ENCODE measurements at regions of chr11 and their contacts with region 1.

Region 1: GRCh38 chr11:14308114-14308896 is 50.7 kb downstream of the RRAS2 start:
- DNase-seq: no peak
- ATAC-seq: peak; percentile 51 to 58
- H3K4me3 ChIP-seq: no peak overlapping the region
- H3K27ac ChIP-seq: no peak overlapping the region
- H3K4me1 ChIP-seq: peaks cover 6% of the 10 kb centered on the region
- H3K27me3 ChIP-seq: no peaks in the 10 kb centered on the region

Region 2: DNA sequence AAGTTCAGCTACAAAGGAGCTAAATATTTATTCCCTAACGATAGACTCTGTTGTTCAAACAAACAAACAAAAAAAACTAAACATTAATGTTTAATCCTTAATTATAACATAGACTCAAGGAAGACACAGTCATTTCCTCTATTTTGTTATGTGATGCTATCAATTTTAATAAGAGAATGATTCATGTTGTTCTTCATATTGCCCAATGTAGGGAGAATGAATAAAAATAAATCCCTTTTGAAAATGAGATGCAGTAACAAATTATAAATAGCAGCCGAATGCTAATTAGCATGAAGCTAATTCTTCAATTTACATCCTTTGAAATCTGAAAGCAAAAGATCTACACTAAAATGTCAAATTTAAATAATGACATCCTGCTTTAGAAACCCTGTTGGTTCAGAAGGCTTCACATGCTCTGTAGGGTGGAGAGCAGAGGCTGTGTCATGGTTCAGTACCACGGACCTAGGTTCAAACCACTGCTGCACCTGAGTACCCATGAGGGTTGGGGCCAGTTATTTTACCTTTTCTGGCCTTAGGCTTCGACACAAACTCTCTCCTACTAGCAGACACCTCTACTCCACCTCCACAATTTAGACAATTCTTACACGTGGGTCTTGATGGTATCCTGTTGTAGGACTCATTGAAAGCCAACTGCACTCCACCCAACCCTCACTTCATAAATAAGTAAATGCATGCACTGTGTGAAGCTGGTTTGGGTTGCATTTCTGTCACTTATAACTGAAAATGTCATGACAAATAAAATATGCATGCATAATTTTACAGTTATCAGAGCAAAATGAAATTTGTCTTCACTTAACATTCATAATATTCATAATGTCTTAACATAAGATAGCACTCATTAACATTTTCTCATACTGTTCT is 38.4 kb before region 1 on chr11:
- intact Hi-C with region 1: no loop called
- DNase-seq: no peak
- ATAC-seq: no peak
- H3K4me3 ChIP-seq: no peak overlapping the region
- H3K27ac ChIP-seq: no peak overlapping the region
- H3K4me1 ChIP-seq: peaks cover 1% of the 10 kb centered on the region
- H3K27me3 ChIP-seq: no peaks in the 10 kb centered on the region

Region 3: DNA sequence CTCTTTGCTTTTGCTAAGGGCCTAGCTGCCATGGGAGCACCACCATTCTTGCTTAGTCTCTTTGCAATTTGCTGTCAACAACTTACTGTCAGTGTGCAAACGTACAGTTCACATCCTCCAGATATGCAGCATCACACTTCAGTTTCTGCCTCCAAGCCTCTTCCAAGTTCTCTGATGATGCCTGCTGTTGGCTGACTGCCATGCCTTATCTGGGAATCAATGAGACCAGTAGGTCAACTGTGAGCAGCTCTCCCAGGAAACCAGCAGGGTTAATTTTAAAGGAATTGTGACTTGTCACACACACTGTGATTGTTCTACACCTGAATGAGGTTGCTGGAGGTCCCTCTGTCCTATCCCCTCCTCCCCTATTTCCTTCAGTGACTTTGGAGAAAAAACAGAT is 135.3 kb after region 1 on chr11:
- intact Hi-C with region 1: loop called in 1 of 4 experiments (anchors 5 kb)
- DNase-seq: no peak
- ATAC-seq: no peak
- H3K4me3 ChIP-seq: no peak overlapping the region
- H3K27ac ChIP-seq: no peak overlapping the region
- H3K4me1 ChIP-seq: peaks cover 2% of the 10 kb centered on the region
- H3K27me3 ChIP-seq: no peaks in the 10 kb centered on the region